ENCODE measurements at regions of chr6 and their contacts with region 1.

Region 1: GRCh38 chr6:142833054-142833453 is 111.9 kb downstream of the HIVEP2 start:
- DNase-seq: peak; percentile 98
- ATAC-seq: peak; percentile 95
- H3K4me3 ChIP-seq: no peak overlapping the region
- H3K27ac ChIP-seq: no peak overlapping the region
- H3K4me1 ChIP-seq: peaks cover 5% of the 10 kb centered on the region; the same call in 1 of the 2 replicates
- H3K27me3 ChIP-seq: no peaks in the 10 kb centered on the region
- CTCF ChIP-seq: no peak
- POLR2A ChIP-seq: peak; percentile 46; the same call in 1 of the 2 replicates
- RAD21 ChIP-seq: no peak; the same call in 1 of the 2 replicates

Region 2: GRCh38 chr6:142790257-142790656 is 42.8 kb before region 1 on chr6:
- CTCF ChIA-PET with region 1: no interaction called
- POLR2A ChIA-PET with region 1: no interaction called
- dilution Hi-C with region 1: no loop called
- in situ Hi-C with region 1: no loop called
- intact Hi-C with region 1: no loop called
- DNase-seq: no peak
- ATAC-seq: no peak
- H3K4me3 ChIP-seq: no peak overlapping the region
- H3K27ac ChIP-seq: no peak overlapping the region
- H3K4me1 ChIP-seq: no peaks in the 10 kb centered on the region
- H3K27me3 ChIP-seq: no peaks in the 10 kb centered on the region
- CTCF ChIP-seq: no peak
- POLR2A ChIP-seq: no peak
- RAD21 ChIP-seq: no peak

Region 3: GRCh38 chr6:142802124-142802523 is 30.9 kb before region 1 on chr6:
- CTCF ChIA-PET with region 1: no interaction called
- POLR2A ChIA-PET with region 1: no interaction called
- dilution Hi-C with region 1: no loop called
- in situ Hi-C with region 1: no loop called
- intact Hi-C with region 1: loop called (anchors 2 kb)
- DNase-seq: peak; percentile 99
- ATAC-seq: peak; percentile 99
- H3K4me3 ChIP-seq: no peak overlapping the region
- H3K27ac ChIP-seq: no peak overlapping the region
- H3K4me1 ChIP-seq: peaks cover 3% of the 10 kb centered on the region; the same call in 1 of the 2 replicates
- H3K27me3 ChIP-seq: no peaks in the 10 kb centered on the region
- CTCF ChIP-seq: no peak
- POLR2A ChIP-seq: peak; percentile 55; the same call in 1 of the 2 replicates
- RAD21 ChIP-seq: peak; percentile 37

Region 4: GRCh38 chr6:142885182-142885867 is 52.3 kb after region 1 on chr6:
- CTCF ChIA-PET with region 1: no interaction called
- POLR2A ChIA-PET with region 1: no interaction called
- dilution Hi-C with region 1: no loop called
- in situ Hi-C with region 1: loop called (anchors 5 kb)
- intact Hi-C with region 1: no loop called
- DNase-seq: peak; percentile 99
- ATAC-seq: peak; percentile 86
- H3K4me3 ChIP-seq: peak overlapping the region; percentile 39
- H3K27ac ChIP-seq: peak overlapping the region; percentile 78
- H3K4me1 ChIP-seq: peaks cover 9% of the 10 kb centered on the region
- H3K27me3 ChIP-seq: no peaks in the 10 kb centered on the region
- CTCF ChIP-seq: no peak
- POLR2A ChIP-seq: peak; percentile 41; the same call in 1 of the 2 replicates
- RAD21 ChIP-seq: peak; percentile 25; the same call in 1 of the 2 replicates

Region 5: DNA sequence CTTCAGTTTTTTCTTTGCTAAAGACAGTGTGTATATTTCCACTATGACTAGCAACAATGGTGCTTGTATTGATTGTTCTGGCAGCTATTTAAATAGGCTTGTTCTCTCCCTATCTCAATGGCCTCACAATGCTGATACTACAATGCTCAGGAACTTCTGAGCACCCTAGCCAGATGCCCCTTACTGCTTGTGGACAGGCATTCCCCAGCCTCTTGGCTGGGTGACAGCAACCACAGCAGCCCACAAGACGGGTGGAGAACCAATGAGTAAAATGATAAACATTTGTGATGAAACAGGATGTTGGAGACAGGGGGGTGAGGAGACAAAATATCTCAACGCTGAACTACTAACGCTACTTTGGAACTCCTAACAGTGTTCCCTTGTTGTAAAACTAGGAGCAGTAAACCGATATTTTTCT is 69.6 kb after region 1 on chr6:
- CTCF ChIA-PET with region 1: no interaction called
- POLR2A ChIA-PET with region 1: no interaction called
- dilution Hi-C with region 1: no loop called
- in situ Hi-C with region 1: no loop called
- intact Hi-C with region 1: no loop called
- DNase-seq: peak; percentile 99
- ATAC-seq: peak; percentile 88
- H3K4me3 ChIP-seq: no peak overlapping the region
- H3K27ac ChIP-seq: no peak overlapping the region
- H3K4me1 ChIP-seq: peaks cover 19% of the 10 kb centered on the region
- H3K27me3 ChIP-seq: no peaks in the 10 kb centered on the region
- CTCF ChIP-seq: no peak
- POLR2A ChIP-seq: peak; percentile 78; the same call in 1 of the 2 replicates
- RAD21 ChIP-seq: peak; percentile 28; the same call in 1 of the 2 replicates

Region 6: GRCh38 chr6:144110210-144110609 is 1277.2 kb after region 1 on chr6:
- CTCF ChIA-PET with region 1: no interaction called
- POLR2A ChIA-PET with region 1: no interaction called
- dilution Hi-C with region 1: no loop called
- in situ Hi-C with region 1: no loop called
- intact Hi-C with region 1: no loop called
- DNase-seq: no peak
- ATAC-seq: no peak
- H3K4me3 ChIP-seq: no peak overlapping the region
- H3K27ac ChIP-seq: no peak overlapping the region
- H3K4me1 ChIP-seq: no peaks in the 10 kb centered on the region
- H3K27me3 ChIP-seq: peaks cover 12% of the 10 kb centered on the region
- CTCF ChIP-seq: no peak
- POLR2A ChIP-seq: no peak
- RAD21 ChIP-seq: no peak

Measured in IMR-90 (cell line).